ENCODE measurements at regions of chrX and their contacts with region 1.

Region 1: GRCh38 chrX:57083143-57083542 is 38.2 kb downstream of the SPIN2B start:
- DNase-seq: no peak
- H3K4me3 ChIP-seq: no peak overlapping the region
- H3K27ac ChIP-seq: no peak overlapping the region
- H3K4me1 ChIP-seq: no peaks in the 10 kb centered on the region
- H3K27me3 ChIP-seq: no peaks in the 10 kb centered on the region
- CTCF ChIP-seq: no peak

Region 2: DNA sequence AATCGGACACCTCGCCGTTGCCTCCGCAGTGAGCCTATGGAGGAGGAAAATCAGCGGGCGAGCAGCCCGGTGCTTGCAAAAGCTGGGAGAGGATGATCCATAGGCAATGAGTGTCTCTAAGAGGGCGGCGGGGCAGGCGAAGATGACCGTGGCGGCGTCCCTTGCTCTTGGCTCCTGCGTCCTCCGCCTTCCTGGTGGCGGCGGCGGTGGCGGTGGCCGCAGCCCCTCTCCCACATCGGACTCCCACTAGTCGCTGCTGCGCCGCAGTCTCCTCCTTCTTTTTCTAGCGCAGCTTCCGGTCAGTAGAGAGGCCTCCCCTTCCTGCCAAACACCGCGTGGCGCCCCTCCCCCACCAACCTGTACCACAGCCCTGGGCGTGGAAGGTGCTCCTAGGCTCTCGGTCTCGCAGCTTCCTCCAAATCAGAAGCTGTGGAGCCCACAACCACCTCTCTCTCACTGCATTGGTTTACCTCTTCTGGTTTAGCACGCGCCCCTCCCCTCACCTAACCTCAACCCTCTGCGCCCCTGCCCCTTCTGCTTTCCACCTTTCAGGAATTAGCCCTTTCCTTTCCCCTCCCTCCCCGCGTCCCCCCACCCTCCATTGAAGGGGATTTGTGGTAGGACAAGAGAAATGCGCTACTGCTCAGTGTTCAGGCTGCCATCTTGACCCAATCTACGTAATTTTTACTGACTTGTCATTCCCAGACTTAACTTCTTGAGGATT is 87.7 kb before region 1 on chrX and contains the start of gene SPIN3:
- CTCF ChIA-PET with region 1: no interaction called
- POLR2A ChIA-PET with region 1: no interaction called
- intact Hi-C with region 1: no loop called
- DNase-seq: peak; percentile 59
- H3K4me3 ChIP-seq: peak within 1 kb of the TSS; percentile 57
- H3K27ac ChIP-seq: no peak within 1 kb of the TSS
- H3K4me1 ChIP-seq: no peaks in the 10 kb centered on the region
- H3K27me3 ChIP-seq: peaks cover 3% of the 10 kb centered on the region
- CTCF ChIP-seq: no peak
- total RNA-seq, gene SPIN3: 7.2 and 7.3 TPM in 2 replicates

Region 3: GRCh38 chrX:57040051-57040450 is 43.1 kb before region 1 on chrX:
- CTCF ChIA-PET with region 1: no interaction called
- POLR2A ChIA-PET with region 1: interaction called, 11 read pairs
- intact Hi-C with region 1: no loop called
- DNase-seq: no peak
- H3K4me3 ChIP-seq: no peak overlapping the region
- H3K27ac ChIP-seq: no peak overlapping the region
- H3K4me1 ChIP-seq: no peaks in the 10 kb centered on the region
- H3K27me3 ChIP-seq: no peaks in the 10 kb centered on the region
- CTCF ChIP-seq: no peak

Region 4: DNA sequence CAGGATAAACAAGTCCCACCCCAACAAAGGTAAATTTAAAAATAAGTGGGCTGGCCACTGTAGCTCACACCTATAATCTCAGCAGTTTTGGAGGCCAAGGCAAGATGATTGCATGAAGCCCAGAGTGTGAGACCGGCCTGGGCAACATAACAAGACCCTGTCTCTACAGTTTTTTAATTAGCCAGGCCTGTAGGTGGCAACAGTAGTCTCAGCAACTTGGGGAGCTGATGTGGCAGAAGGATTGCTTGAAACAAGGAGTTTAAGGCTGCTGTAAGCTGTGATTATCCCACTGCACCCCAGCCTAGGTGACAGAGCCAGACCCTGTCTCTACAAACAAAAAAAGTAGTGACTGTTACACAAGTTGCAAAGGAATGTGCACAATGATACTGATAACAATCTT is 128.8 kb after region 1 on chrX:
- CTCF ChIA-PET with region 1: no interaction called
- POLR2A ChIA-PET with region 1: no interaction called
- intact Hi-C with region 1: no loop called
- DNase-seq: no peak
- H3K4me3 ChIP-seq: no peak overlapping the region
- H3K27ac ChIP-seq: no peak overlapping the region
- H3K4me1 ChIP-seq: no peaks in the 10 kb centered on the region
- H3K27me3 ChIP-seq: no peaks in the 10 kb centered on the region
- CTCF ChIP-seq: no peak